ENCODE measurements at regions of chr19 and their contacts with region 1.

Region 1: GRCh38 chr19:3762501-3763459 is at the start of gene MRPL54:
- DNase-seq: peak; percentile 99 to 100 (median 99)
- H3K4me3 ChIP-seq: peak within 1 kb of the TSS; percentile 52 to 95 (median 87)
- H3K4me3 Mint-ChIP-seq: peak within 1 kb of the TSS; percentile 93 to 98
- H3K27ac ChIP-seq: peak within 1 kb of the TSS; percentile 98 to 99
- H3K27ac Mint-ChIP-seq: peak within 1 kb of the TSS; percentile 99 to 100 (median 99)
- H3K4me1 ChIP-seq: peaks cover 23 to 24% of the 10 kb centered on the region in 2 donors
- H3K4me1 Mint-ChIP-seq: peaks cover 19% of the 10 kb centered on the region
- H3K27me3 ChIP-seq: no peaks in the 10 kb centered on the region
- H3K27me3 Mint-ChIP-seq: peaks cover 0 to 3% (median 0%) of the 10 kb centered on the region in 3 donors
- CTCF ChIP-seq: no peak
- polyA plus RNA-seq, gene MRPL54: 39.9 to 133 (median 115) TPM

Region 2: DNA sequence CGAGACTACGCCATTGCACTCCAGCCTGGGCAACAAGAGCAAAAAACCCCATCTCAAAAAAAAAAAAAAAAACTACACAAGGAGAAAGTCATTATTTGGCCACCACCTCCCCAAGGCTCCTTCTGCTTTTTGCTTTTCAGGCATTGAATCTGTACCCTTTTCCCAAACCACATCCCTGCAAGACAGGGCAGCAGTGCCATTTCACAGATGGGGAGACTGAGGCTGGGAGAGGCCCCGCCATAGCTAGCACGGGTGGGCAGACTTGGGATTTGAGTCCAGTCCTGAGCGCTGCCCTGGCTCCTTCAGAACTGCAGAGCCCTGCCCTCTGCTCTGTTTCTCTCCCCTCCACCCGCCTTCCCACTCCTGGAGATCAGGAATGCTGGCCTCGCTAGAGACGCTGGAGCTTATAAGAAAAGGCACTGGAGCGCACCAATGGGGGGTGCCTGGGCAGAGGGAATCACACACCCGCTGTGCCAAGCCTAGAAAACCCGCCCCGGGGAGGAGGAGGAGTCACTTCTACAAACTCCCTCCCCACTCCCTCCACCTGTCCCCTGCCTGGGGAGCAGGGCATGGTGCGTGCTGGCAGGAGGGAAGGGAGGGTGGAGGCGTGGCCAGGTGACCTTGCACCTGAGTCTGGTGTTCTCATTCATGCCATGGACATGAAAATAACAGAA is 37.0 kb before region 1 on chr19:
- intact Hi-C with region 1: no loop called
- DNase-seq: no peak
- H3K4me3 ChIP-seq: no peak overlapping the region
- H3K4me3 Mint-ChIP-seq: no peak overlapping the region
- H3K27ac ChIP-seq: no peak overlapping the region
- H3K27ac Mint-ChIP-seq: no peak overlapping the region
- H3K4me1 ChIP-seq: peaks cover 5 to 10% of the 10 kb centered on the region in 2 donors
- H3K4me1 Mint-ChIP-seq: peaks cover 3% of the 10 kb centered on the region
- H3K27me3 ChIP-seq: peaks cover 19 to 30% of the 10 kb centered on the region in 2 donors
- H3K27me3 Mint-ChIP-seq: peaks cover 35 to 54% (median 35%) of the 10 kb centered on the region in 3 donors
- CTCF ChIP-seq: no peak

Region 3: GRCh38 chr19:3821857-3822364 is 59.1 kb after region 1 on chr19:
- intact Hi-C with region 1: loop called in 1 of 2 experiments (anchors 5 kb)
- DNase-seq: peak; percentile 57 to 74 (median 61)
- H3K4me3 ChIP-seq: no peak overlapping the region
- H3K4me3 Mint-ChIP-seq: peak overlapping the region in 1 of 2 donors; percentile 60
- H3K27ac ChIP-seq: no peak overlapping the region
- H3K27ac Mint-ChIP-seq: peak overlapping the region in 1 of 7 donors; percentile 45
- H3K4me1 ChIP-seq: peaks cover 8 to 18% of the 10 kb centered on the region in 2 donors
- H3K4me1 Mint-ChIP-seq: peaks cover 14% of the 10 kb centered on the region
- H3K27me3 ChIP-seq: no peaks in the 10 kb centered on the region
- H3K27me3 Mint-ChIP-seq: peaks cover 9 to 22% (median 14%) of the 10 kb centered on the region in 3 donors
- CTCF ChIP-seq: peak; percentile 100